Vagina (tissue), 2 donors: ENCODE measurements at regions of chr1 and their contacts with region 1.

Region 1: DNA sequence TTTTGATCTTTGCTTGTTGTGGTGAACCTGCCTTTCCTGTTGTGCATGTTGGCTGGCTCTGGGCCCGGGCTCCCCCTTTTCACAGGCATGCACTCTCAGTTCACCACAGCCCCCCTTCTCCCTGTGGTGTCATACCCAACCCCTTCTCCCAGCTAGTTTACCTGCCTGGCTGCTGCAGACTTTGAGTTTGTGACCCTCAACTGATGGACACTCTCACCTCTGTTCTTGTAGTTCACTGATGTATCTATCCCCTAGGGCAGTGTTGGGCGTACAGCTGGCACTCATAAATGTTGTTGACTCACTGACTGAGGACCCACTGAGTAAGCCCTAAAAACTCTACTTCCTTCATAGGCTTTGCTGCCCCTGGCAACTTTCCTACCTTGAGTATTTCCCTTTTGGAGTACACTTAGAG is 54.9 kb downstream of the WDR64 start:
- DNase-seq: no peak
- H3K4me3 ChIP-seq: no peak overlapping the region
- H3K27ac ChIP-seq: no peak overlapping the region
- H3K4me1 ChIP-seq: peaks cover 6% of the 10 kb centered on the region
- H3K27me3 ChIP-seq: no peaks in the 10 kb centered on the region
- CTCF ChIP-seq: no peak
- POLR2A ChIP-seq: no peak

Region 2: DNA sequence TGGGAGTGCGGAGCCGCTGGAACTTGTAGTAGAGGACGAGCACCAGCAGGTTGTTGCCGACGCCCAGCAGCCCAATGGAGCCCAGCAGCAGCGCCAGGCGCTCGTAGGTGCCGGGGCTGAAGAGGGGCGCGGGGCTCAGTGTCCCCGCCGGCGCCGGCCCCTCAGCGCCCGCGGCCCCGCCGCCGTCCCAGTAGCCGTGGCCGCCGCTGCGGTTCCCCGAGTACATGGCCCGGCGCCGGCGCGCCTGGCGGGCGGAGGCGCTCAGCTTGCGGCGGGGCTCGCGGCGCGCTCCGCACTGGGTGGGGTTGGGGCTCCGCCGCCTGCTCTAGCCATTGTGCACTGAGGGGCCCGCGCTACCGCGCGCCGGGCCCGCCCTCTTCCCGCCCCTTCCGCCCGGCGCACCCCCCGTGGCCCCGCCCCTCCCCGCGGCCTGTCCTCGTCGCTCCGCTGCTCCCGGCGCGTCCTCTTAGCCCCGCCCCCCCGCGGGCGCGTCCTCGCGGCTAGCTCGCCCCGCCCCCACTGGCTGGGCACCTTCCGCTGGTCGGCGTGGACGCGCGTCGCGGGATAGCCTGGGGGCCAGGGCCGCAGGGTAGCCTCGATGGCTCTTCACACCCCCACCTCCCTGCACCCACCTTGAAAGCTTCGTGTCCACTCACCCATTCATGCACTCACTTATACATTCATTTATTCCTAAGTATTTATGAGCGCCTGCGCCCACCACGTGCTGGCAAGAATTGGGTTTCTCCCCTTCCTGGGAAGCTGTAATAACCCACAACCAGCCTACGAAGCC is 66.7 kb before region 1 on chr1 and contains the starts of genes CHML and OPN3:
- intact Hi-C with region 1: no loop called
- DNase-seq: no peak
- H3K4me3 ChIP-seq: peak within 1 kb of the TSS; percentile 84 to 97
- H3K27ac ChIP-seq: peak within 1 kb of the TSS; percentile 81
- H3K4me1 ChIP-seq: peaks cover 29% of the 10 kb centered on the region
- H3K27me3 ChIP-seq: no peaks in the 10 kb centered on the region
- CTCF ChIP-seq: no peak
- POLR2A ChIP-seq: peak; percentile 31 to 74
- total RNA-seq, gene CHML: 11.3 TPM
- total RNA-seq, gene OPN3: 15.5 TPM

Region 3: GRCh38 chr1:241658081-241658793 is 48.7 kb before region 1 on chr1:
- intact Hi-C with region 1: no loop called
- DNase-seq: no peak
- H3K4me3 ChIP-seq: no peak overlapping the region
- H3K27ac ChIP-seq: no peak overlapping the region
- H3K4me1 ChIP-seq: no peaks in the 10 kb centered on the region
- H3K27me3 ChIP-seq: no peaks in the 10 kb centered on the region
- CTCF ChIP-seq: no peak
- POLR2A ChIP-seq: no peak

Region 4: GRCh38 chr1:241782396-241782795 is 75.4 kb after region 1 on chr1:
- intact Hi-C with region 1: no loop called
- DNase-seq: no peak
- H3K4me3 ChIP-seq: no peak overlapping the region
- H3K27ac ChIP-seq: no peak overlapping the region
- H3K4me1 ChIP-seq: no peaks in the 10 kb centered on the region
- H3K27me3 ChIP-seq: no peaks in the 10 kb centered on the region
- CTCF ChIP-seq: no peak
- POLR2A ChIP-seq: no peak

Region 5: DNA sequence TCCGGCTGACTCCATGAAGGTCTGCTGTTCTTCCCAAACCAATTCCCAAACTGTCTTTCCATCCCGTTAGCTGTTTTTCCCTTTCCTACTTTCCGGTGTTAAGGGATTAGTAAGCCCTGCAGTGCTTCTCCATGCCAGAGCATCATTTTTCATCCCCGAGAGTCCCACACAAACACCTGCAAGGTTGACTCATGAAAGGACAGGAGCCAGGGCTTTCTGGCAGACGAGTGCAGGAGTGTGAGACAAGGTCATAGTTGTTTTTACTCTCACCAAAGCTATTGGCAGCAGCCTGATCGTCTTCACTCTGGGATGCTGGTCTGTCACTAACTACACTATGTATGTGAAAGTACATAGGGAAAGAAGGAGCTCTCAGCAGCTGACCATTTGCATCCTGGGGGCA is 240.4 kb after region 1 on chr1:
- intact Hi-C with region 1: no loop called
- DNase-seq: no peak
- H3K4me3 ChIP-seq: no peak overlapping the region
- H3K27ac ChIP-seq: no peak overlapping the region
- H3K4me1 ChIP-seq: no peaks in the 10 kb centered on the region
- H3K27me3 ChIP-seq: no peaks in the 10 kb centered on the region
- CTCF ChIP-seq: no peak
- POLR2A ChIP-seq: no peak

Region 6: GRCh38 chr1:242405947-242406346 is 699.0 kb after region 1 on chr1:
- intact Hi-C with region 1: loop called (anchors 5 kb)
- DNase-seq: no peak
- H3K4me3 ChIP-seq: no peak overlapping the region
- H3K27ac ChIP-seq: no peak overlapping the region
- H3K4me1 ChIP-seq: no peaks in the 10 kb centered on the region
- H3K27me3 ChIP-seq: no peaks in the 10 kb centered on the region
- CTCF ChIP-seq: no peak
- POLR2A ChIP-seq: no peak